ENCODE measurements at regions of chr3 and their contacts with region 1.

Region 1: GRCh38 chr3:196942226-196942914 is at the start of gene NCBP2:
- DNase-seq: peak; percentile 99
- H3K4me3 ChIP-seq: peak within 1 kb of the TSS; percentile 84 to 100 (median 98)
- H3K27ac ChIP-seq: peak within 1 kb of the TSS; percentile 86 to 94 (median 94)
- H3K4me1 ChIP-seq: peaks cover 0 to 37% (median 25%) of the 10 kb centered on the region in 4 donors
- H3K27me3 ChIP-seq: no peaks in the 10 kb centered on the region
- CTCF ChIP-seq: peak; percentile 42 to 82 (median 50)
- EP300 ChIP-seq: peak in 1 of 4 donors; percentile 56
- POLR2A ChIP-seq: peak; percentile 69 to 79
- total RNA-seq, gene NCBP2: 35.7 to 44.9 (median 41.7) TPM

Region 2: DNA sequence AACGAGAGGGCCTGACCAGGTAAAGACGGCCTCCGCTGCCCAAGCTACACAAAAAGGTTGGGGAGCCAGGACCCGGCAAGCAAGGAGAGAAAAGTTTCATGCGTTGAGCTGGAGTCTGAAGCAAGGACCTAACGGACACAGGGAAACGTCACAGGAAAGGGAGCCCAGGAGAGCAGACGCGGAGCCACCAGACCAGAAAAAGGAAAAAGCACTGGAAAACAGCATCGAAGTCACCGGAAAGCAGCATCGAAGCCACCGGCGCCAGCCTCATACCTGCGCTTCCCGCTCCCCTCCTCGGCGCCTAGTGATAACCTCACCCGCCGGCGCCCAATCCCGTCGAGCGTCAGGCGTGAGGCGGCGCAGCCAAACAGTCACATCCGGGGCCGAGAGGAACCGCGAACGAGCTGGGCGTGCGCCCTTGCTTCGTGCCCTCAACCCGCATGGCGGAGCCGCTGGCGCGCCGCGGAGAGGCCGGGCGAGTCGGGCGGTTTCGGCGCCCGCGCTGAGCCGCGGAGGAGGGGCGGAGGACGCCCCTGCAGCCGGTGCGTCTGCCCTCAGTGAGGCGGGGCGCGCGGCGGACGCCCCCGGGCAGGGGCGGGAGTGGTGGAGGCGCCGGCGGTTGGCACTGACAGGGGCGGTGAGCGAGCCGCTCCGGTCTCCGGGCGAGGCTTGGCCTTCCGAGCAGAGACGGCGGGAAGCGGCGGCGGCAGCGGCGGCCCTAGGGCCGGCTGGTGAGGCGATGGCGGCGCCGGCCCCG is 373.9 kb before region 1 on chr3 and contains the starts of genes FBXO45 and WDR53:
- intact Hi-C with region 1: loop called (anchors 2 kb)
- DNase-seq: peak; percentile 97
- H3K4me3 ChIP-seq: peak within 1 kb of the TSS; percentile 65 to 97 (median 76)
- H3K27ac ChIP-seq: peak within 1 kb of the TSS; percentile 83 to 97 (median 88)
- H3K4me1 ChIP-seq: peaks cover 0 to 29% (median 27%) of the 10 kb centered on the region in 4 donors
- H3K27me3 ChIP-seq: no peaks in the 10 kb centered on the region
- CTCF ChIP-seq: no peak
- EP300 ChIP-seq: no peak
- POLR2A ChIP-seq: peak; percentile 84 to 87
- total RNA-seq, gene FBXO45: 6.5 to 10.9 (median 8.1) TPM
- total RNA-seq, gene WDR53: 2.9 to 7.2 (median 4.6) TPM

Region 3: DNA sequence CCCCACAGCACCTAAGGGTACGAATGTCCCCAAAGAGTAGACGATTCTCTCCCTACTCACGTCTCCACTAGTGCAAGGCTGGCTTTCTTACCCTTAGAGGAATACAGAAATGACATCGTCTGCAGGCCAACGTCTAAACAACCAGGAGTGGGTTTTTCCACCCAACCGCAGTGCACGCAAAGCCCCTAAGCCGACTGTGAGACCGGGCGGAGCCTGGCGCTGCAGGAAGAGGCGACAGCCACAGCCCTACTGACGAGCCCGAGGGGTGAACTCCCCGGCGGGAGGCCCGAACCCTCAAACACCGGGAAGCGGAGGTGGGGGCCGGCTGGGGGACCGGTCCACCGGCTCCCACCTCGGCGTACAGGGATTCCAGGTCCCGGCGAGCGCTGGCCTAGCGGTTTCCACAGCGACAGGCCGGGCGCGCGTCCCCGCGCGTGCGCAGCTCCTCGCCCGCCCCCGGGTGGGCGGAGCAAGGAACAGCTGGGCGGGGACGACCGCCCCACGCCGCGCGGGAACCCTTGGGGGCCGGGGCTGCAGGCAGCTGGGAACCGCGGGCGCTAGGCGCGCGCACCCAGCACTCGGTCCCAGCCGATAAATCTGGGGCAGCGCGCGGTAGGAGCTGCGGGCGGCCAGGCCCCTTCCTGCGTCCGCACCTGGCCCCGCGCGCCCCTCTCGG is 230.4 kb before region 1 on chr3 and contains the starts of genes CEP19 and PIGX:
- intact Hi-C with region 1: loop called (anchors 10 kb)
- DNase-seq: peak; percentile 90
- H3K4me3 ChIP-seq: peak within 1 kb of the TSS; percentile 62 to 81 (median 72)
- H3K27ac ChIP-seq: peak within 1 kb of the TSS; percentile 84 to 97 (median 94)
- H3K4me1 ChIP-seq: peaks cover 0 to 22% (median 17%) of the 10 kb centered on the region in 4 donors
- H3K27me3 ChIP-seq: no peaks in the 10 kb centered on the region
- CTCF ChIP-seq: no peak
- EP300 ChIP-seq: no peak
- POLR2A ChIP-seq: no peak
- total RNA-seq, gene CEP19: 1.6 to 2.6 (median 2.0) TPM
- total RNA-seq, gene PIGX: 20.9 to 41.0 (median 27.8) TPM

Region 4: DNA sequence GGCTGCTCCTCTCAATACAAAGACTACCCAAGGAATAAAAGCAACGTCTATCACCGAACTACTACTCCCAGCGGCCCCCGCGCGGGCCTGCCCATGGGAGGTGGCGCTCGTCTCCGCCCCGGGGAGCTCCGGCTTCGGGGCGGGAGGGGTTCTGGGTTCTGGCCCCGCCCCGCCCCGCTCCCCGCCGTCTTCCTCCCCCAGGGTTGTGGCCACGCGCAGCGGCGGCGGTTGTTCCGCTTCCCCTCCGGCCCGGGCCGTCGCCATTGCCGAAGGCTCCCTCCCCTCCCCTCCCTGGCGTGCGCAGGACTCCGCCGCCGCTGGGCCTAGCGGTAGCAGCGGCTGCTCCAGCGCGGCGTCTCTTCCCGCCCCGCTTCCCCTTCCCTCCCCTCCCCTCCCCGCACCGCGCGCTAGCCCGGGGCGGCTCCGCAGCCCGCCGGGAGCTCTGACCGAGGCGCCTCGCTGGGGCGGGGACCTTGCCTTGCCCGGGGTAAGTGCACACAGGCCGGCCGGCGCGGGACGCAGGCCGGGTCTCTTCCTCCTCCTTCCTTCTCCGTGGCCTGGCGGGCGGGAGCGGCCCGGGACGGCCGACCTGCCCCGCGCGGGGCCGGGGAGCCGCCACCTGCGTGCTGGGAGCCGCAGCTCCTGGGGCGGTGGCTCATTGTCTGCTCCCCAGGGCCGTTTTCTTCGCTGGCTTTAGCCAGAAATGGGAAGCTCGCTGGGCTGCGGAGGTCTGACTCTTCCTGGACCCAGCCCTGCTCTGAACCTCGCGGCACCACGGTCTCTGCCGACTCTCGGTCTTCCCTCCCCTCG is 202.5 kb before region 1 on chr3 and contains the start of gene PAK2:
- intact Hi-C with region 1: loop called (anchors 10 kb)
- DNase-seq: peak; percentile 94
- H3K4me3 ChIP-seq: peak within 1 kb of the TSS; percentile 74 to 90 (median 88)
- H3K27ac ChIP-seq: peak within 1 kb of the TSS; percentile 96 to 99 (median 96)
- H3K4me1 ChIP-seq: peaks cover 0 to 35% (median 23%) of the 10 kb centered on the region in 4 donors
- H3K27me3 ChIP-seq: no peaks in the 10 kb centered on the region
- CTCF ChIP-seq: no peak
- EP300 ChIP-seq: no peak
- POLR2A ChIP-seq: peak in 1 of 2 donors; percentile 45
- total RNA-seq, gene PAK2: 35.5 to 44.6 (median 37.7) TPM

Region 5: GRCh38 chr3:196867507-196868296 is 74.7 kb before region 1 on chr3 and contains the start of gene SENP5:
- intact Hi-C with region 1: loop called (anchors 1 kb)
- DNase-seq: peak; percentile 94
- H3K4me3 ChIP-seq: peak within 1 kb of the TSS; percentile 83 to 100 (median 98)
- H3K27ac ChIP-seq: peak within 1 kb of the TSS; percentile 94 to 100 (median 96)
- H3K4me1 ChIP-seq: peaks cover 0 to 47% (median 28%) of the 10 kb centered on the region in 4 donors
- H3K27me3 ChIP-seq: no peaks in the 10 kb centered on the region
- CTCF ChIP-seq: no peak
- EP300 ChIP-seq: no peak
- POLR2A ChIP-seq: peak; percentile 73 to 79
- total RNA-seq, gene SENP5: 41.5 to 54.6 (median 45.8) TPM

Region 6: GRCh38 chr3:196914866-196915265 is 27.5 kb before region 1 on chr3:
- intact Hi-C with region 1: no loop called
- DNase-seq: no peak
- H3K4me3 ChIP-seq: no peak overlapping the region
- H3K27ac ChIP-seq: no peak overlapping the region
- H3K4me1 ChIP-seq: no peaks in the 10 kb centered on the region
- H3K27me3 ChIP-seq: no peaks in the 10 kb centered on the region
- CTCF ChIP-seq: no peak
- EP300 ChIP-seq: no peak
- POLR2A ChIP-seq: no peak

Region 7: DNA sequence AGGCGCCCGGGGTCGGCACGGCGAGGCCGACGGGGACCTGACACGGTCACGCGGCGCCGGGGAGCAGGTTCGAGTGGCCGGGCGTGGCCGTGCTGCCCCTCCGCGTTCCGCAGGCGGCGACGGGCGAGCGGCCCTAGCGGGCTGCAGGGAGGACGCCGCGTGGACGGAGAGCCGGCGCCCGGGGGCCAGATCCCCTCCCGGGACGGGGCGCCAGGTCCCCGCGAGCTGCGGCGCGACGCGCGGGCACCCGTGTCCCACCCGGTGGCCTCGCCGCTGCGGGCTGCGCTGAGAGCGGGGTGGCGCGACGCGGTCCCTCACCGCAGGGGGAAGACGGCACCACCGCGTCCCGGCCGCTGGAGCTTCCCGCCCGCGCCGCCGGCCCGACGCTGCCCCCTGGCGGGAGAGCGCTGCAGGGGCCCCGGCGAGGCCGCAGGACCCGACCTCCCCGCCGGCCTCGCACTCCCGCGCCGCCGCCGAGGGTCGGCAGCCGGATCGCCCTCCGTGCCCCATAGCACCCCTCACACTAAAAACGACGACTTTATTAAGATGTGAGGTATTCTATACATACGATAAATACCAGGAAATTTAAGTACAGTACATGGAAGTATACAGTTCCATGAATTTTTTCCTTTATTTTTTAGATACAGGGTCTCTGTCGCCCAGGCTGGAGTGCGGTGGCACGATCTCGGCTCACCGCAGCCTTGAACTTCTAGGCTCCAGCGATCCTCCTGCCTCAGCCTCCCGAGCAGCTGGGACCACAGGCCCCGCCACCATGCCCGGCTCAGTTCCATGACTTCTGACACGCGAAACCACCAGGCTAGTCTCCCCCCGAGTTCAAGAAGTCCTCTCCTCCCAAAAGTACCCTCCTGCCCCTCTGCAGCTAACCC is 27.5 kb after region 1 on chr3:
- intact Hi-C with region 1: loop called (anchors 1 kb)
- DNase-seq: no peak
- H3K4me3 ChIP-seq: peak overlapping the region; percentile 72 to 88 (median 76)
- H3K27ac ChIP-seq: peak overlapping the region; percentile 72 to 83 (median 79)
- H3K4me1 ChIP-seq: peaks cover 0 to 16% (median 11%) of the 10 kb centered on the region in 4 donors
- H3K27me3 ChIP-seq: no peaks in the 10 kb centered on the region
- CTCF ChIP-seq: peak in 3 of 4 experiments; percentile 15 to 95 (median 20)
- EP300 ChIP-seq: no peak
- POLR2A ChIP-seq: no peak

Region 8: DNA sequence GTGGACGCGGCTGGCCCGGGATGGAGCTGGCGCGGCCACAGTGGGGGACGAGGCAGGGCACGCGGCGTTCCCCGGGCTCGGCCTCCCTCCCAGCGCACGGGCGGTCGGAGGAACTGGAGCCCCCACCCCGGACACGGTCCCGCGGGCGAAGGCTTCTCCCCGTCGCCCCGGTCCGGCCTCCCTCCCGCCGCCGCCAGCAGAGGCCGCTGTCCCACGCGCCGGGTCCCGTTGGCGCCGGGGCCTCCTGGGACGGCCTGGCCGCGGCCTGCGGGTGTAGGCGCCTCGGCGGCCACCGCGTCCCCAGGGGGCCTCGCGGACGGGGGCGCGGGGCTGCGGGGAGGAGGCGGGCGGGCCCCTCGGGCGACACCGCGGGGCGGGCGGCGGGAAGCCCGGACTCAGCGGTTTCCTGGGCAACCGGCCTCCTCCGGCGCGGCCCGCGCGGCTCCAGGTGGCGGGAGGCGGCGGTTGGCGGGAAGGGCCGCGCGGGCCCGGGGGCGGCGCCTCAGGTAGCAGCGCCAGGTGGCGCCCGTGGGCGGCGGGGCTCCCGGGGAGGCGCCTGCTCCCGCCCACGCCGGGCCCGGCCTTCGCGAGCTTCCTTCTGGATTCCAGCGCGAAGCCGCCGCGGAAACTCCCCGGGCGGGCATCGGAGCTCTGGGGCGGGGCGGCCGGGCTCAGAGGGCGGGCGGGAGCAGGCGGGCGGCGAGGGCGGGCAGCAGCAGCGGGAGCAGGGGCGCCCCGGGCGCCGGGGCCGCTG is 60.5 kb after region 1 on chr3:
- intact Hi-C with region 1: loop called (anchors 2 kb)
- DNase-seq: peak; percentile 85
- H3K4me3 ChIP-seq: peak overlapping the region; percentile 46 to 80 (median 72)
- H3K27ac ChIP-seq: peak overlapping the region; percentile 82 to 90 (median 86)
- H3K4me1 ChIP-seq: peaks cover 0 to 18% (median 13%) of the 10 kb centered on the region in 4 donors
- H3K27me3 ChIP-seq: no peaks in the 10 kb centered on the region
- CTCF ChIP-seq: peak in 3 of 4 experiments; percentile 19 to 79 (median 41)
- EP300 ChIP-seq: no peak
- POLR2A ChIP-seq: no peak